ENCODE measurements at regions of chr6 and their contacts with region 1.

Region 1: DNA sequence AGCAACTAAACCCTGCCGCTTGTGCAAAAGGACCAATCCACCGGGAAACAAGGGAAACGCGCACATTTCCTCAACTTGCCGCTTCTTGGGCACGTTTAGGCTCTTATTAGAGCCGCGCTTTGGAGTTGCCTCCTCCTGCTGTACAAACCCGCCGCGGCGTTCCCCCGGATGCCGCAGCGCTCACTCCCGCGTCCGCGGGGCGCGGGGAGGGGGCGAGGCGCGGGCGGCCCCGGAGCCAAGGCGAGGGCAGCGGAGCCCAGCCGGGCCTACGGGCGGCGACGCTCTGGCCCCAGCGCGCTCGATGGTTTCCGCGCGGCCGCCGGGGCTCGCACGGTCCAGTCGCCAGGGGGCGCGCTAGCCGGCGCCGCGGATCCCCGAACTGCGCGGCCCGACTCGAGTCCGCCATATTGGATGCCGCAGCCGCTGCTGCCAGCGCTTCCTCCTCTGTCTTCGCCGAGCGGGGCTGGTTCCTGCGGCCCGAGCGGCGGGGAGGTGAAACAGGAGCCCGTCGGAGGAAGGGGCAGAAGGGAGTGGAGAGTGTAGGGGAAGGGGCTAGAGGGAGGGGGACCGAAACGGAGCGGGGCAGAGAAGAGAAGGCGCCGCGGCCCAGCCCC is at the start of gene SCAF8:
- DNase-seq: peak; percentile 87
- H3K4me3 ChIP-seq: peak within 1 kb of the TSS; percentile 74 to 98 (median 98)
- H3K27ac ChIP-seq: peak within 1 kb of the TSS; percentile 96 to 100 (median 100)
- H3K4me1 ChIP-seq: peaks cover 0 to 46% (median 44%) of the 10 kb centered on the region in 4 donors
- H3K27me3 ChIP-seq: no peaks in the 10 kb centered on the region
- CTCF ChIP-seq: peak in 2 of 4 experiments; percentile 19 to 84
- EP300 ChIP-seq: peak in 1 of 4 donors; percentile 1
- POLR2A ChIP-seq: peak in 1 of 2 donors; percentile 35
- total RNA-seq, gene SCAF8: 37.1 to 46.3 (median 40.8) TPM

Region 2: DNA sequence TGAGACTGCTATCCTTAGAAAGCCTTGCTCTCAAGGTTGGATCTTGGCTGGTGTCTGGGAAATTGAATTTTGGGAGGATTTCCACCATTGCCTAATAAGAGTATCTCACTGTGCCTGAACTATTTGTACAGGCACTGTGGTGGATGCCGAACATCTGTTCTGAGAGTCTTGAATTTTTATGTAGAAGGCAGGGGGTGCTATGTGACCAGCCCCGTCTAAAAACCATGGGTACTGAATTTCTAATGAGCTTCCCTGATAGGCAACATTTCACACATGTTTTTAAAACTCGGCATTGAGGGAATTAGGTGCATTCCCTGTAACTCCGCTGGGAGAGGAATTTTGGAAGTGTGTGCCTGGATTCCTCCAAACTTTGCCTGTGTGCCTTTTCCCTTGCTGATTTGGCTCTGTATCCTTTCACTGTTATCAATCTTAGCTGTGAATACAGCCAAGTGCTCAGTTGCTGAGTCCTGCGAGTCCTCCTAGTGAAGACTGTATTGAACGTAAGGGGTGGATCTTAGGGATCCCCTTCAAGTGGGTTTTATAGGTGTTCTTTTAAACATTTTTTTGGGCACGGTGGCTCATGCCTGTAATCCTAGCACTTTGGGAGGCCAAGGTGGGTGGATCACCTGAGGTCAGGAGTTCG is 27.5 kb before region 1 on chr6:
- intact Hi-C with region 1: no loop called
- DNase-seq: no peak
- H3K4me3 ChIP-seq: no peak overlapping the region
- H3K27ac ChIP-seq: no peak overlapping the region
- H3K4me1 ChIP-seq: no peaks in the 10 kb centered on the region
- H3K27me3 ChIP-seq: no peaks in the 10 kb centered on the region
- CTCF ChIP-seq: no peak
- EP300 ChIP-seq: no peak
- POLR2A ChIP-seq: no peak

Region 3: DNA sequence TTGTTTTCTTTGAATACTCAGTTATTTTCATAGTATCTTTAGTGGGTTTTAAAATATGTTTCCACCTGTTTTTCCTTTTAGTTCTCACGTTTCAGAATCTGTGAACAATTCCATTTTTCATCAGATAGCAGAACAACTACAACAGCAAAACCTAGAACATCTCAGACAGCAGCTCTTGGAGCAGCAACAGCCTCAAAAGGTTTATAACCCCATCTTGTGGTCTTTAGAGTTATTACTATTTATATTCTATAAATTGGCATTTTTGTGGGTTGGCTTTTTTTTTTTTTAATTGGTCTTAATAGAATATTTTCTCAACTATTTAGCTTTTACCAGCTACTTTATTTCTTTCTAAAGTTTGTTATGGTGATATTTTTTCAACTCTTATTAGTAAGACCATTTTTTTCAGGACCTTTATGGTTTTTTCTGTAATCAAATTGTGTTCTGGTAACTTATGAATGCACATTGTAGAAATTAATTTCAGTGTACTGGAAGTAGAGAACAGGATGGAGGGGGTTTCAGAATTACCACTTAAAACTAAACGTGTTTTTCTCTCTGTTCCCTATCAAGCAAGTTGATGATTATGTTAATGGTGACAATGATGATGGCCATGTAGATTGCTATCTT is 72.3 kb after region 1 on chr6:
- intact Hi-C with region 1: loop called (anchors 2 kb)
- DNase-seq: no peak
- H3K4me3 ChIP-seq: no peak overlapping the region
- H3K27ac ChIP-seq: no peak overlapping the region
- H3K4me1 ChIP-seq: no peaks in the 10 kb centered on the region
- H3K27me3 ChIP-seq: no peaks in the 10 kb centered on the region
- CTCF ChIP-seq: peak in 3 of 4 experiments; percentile 9 to 32 (median 24)
- EP300 ChIP-seq: no peak
- POLR2A ChIP-seq: no peak